Transverse colon (tissue), 4 donors: ENCODE measurements at regions of chr2 and their contacts with region 1.

Region 1: DNA sequence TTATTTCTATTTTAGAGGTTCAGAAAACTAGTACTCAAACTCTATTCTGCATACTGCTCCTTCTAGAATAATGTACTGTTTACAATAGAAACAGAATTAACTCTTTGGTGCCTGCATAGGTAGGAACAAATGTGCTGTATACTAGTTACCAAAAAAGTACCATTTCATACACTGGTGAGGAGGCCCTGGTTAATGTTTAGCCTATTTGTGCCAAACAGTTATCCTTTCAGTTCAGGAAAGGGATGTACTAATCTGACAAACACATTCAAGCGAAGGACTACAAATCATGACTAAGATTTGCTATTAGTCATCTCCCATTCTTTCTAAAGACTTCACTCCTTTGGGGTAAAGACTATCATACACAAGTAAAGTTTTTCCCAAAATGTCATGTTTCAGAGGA is 47.4 kb downstream of the EXOC6B start:
- DNase-seq: no peak
- H3K4me3 ChIP-seq: no peak overlapping the region
- H3K27ac ChIP-seq: no peak overlapping the region
- H3K4me1 ChIP-seq: peaks cover 0 to 13% (median 6%) of the 10 kb centered on the region in 4 donors
- H3K27me3 ChIP-seq: no peaks in the 10 kb centered on the region
- CTCF ChIP-seq: no peak
- EP300 ChIP-seq: no peak
- POLR2A ChIP-seq: no peak

Region 2: DNA sequence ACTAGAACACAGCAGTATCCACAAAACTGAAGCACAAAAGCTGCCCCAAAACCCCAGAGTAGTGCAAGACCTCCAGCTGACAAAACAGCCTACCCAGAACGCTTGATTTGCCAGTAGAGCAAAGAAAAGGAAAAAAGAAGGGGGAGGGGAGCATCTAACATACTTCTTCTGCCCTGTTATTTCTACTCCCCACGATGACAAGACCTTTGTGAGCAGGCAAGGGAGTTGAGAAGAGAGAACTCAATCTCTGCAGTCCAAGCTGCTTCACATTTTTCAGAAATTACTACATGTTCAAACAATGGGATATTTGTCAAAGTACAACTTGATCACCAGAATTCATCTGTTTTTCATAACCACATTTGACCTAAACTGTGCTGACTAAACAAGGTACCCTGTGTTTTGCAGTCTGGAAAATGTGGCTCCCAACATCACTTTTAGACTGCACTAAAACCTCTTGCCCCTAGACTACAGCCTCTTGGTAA is 239.3 kb before region 1 on chr2:
- in situ Hi-C with region 1: no loop called
- intact Hi-C with region 1: no loop called
- DNase-seq: no peak
- H3K4me3 ChIP-seq: no peak overlapping the region
- H3K27ac ChIP-seq: no peak overlapping the region
- H3K4me1 ChIP-seq: peaks cover 0 to 5% (median 0%) of the 10 kb centered on the region in 4 donors
- H3K27me3 ChIP-seq: no peaks in the 10 kb centered on the region
- CTCF ChIP-seq: no peak
- EP300 ChIP-seq: no peak
- POLR2A ChIP-seq: no peak

Region 3: DNA sequence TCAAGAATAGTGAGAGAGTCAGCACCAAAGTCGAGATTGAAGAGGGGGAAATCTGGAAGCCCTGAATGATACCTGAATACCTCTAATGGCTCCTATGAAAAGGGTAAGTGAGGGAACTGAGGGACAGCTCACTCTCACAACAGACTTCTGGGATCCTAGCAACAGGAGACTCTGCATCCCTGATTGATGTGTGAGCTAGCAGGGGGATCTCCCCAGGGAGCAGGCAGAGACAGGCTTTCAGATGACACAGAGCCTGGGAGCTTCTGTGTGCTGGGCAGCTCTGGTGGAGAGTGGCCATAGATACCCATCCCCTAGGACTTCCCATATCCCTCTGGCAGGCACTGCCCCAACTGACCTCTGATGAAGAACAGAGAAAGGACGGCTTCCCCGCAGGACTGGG is 158.8 kb before region 1 on chr2:
- in situ Hi-C with region 1: no loop called
- intact Hi-C with region 1: no loop called
- DNase-seq: no peak
- H3K4me3 ChIP-seq: no peak overlapping the region
- H3K27ac ChIP-seq: no peak overlapping the region
- H3K4me1 ChIP-seq: no peaks in the 10 kb centered on the region
- H3K27me3 ChIP-seq: no peaks in the 10 kb centered on the region
- CTCF ChIP-seq: no peak
- EP300 ChIP-seq: no peak
- POLR2A ChIP-seq: no peak

Region 4: GRCh38 chr2:72851321-72851720 is 72.9 kb after region 1 on chr2:
- in situ Hi-C with region 1: loop called in 3 of 4 experiments (anchors 5 to 10 kb)
- intact Hi-C with region 1: no loop called
- DNase-seq: no peak
- H3K4me3 ChIP-seq: no peak overlapping the region
- H3K27ac ChIP-seq: no peak overlapping the region
- H3K4me1 ChIP-seq: no peaks in the 10 kb centered on the region
- H3K27me3 ChIP-seq: peaks cover 18% of the 10 kb centered on the region
- CTCF ChIP-seq: no peak
- EP300 ChIP-seq: no peak
- POLR2A ChIP-seq: no peak